AG04449 (cell line): ENCODE measurements at regions of chr5 and their contacts with region 1.

Region 1: GRCh38 chr5:150560401-150561193 is 52.7 kb downstream of the NDST1 start:
- DNase-seq: no peak
- H3K4me3 ChIP-seq: no peak overlapping the region
- CTCF ChIP-seq: peak; percentile 76

Region 2: DNA sequence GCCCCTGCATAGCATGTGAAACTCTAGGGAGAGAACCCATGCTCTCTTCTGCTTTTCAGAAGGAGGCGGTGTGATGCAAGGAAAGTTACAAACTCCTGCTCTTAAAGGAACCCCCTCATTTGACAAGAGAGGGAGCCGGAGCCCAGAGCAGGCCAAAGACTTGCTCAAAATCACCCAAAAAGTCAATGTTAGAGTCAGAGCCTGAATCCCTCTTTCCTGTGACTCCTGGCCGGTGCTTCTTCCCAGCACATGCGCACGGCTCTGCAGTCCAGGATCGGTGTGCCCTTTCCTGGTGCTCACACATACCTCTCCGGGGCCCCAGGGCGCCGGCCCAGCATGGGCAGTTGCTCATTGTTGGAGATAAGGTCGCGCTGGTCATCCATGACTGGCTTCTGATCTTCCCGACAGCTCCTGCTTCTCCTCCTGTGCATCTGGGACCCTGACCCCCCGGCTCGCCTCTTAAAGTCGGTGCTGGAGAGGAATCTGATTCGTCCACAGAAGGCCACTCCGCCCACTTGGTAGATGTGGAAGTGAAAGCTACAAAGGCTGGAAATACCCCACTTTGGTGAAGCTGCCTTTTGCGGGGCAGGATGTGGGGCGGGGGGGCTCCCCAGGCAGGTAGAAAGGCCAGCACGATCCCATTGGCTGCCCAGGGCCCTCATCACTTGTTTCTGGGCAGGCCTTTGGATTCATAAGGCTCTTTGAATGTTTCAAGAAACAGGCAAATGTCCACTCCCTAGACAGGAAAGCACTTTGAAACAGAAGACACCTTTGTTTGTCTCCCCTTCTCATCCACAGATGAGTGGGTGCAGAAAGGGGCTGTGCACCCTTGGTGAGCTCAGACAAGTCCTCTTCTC is 148.1 kb before region 1 on chr5 and contains the start of gene CD74:
- CTCF ChIA-PET with region 1: no interaction called
- POLR2A ChIA-PET with region 1: no interaction called
- DNase-seq: no peak
- H3K4me3 ChIP-seq: no peak within 1 kb of the TSS
- CTCF ChIP-seq: no peak

Region 3: GRCh38 chr5:150449517-150450339 is 110.9 kb before region 1 on chr5 and contains the start of gene RPS14:
- CTCF ChIA-PET with region 1: interaction called, 157 read pairs
- POLR2A ChIA-PET with region 1: interaction called, 4 read pairs
- DNase-seq: peak; percentile 52
- H3K4me3 ChIP-seq: peak within 1 kb of the TSS; percentile 68
- CTCF ChIP-seq: peak; percentile 93

Region 4: DNA sequence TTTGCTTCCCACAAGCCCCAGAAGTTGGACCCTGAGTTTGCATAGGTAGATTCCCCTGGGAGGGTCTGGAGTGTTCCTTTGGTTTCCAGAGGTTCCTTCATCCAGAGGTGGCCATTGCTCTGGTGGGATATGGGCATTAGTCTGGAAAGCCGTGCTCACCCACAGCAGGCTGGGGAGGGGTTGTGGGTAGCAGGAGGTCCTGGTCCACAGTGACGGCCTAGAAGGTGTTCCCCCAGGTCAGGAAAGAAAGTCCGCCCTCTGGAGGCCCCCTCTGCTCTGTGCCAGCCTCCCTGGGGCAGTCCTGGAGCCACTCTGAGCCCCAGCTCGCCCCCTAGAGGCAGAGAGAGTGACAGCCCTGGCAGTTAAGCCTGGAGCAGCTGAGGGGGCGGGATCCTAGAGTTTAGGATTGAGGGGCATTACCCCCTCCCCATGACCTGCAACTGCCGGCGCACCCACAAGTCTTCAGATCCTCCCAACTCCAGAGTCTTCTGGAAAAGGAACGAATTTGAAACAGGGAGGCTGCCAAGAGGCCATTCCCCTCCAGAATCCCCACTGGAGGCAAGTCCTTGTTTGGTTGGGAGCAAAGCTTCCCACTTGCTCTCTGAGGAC is 15.9 kb before region 1 on chr5:
- CTCF ChIA-PET with region 1: interaction called, 37 read pairs
- POLR2A ChIA-PET with region 1: no interaction called
- DNase-seq: no peak
- H3K4me3 ChIP-seq: no peak overlapping the region
- CTCF ChIP-seq: peak; percentile 81

Region 5: DNA sequence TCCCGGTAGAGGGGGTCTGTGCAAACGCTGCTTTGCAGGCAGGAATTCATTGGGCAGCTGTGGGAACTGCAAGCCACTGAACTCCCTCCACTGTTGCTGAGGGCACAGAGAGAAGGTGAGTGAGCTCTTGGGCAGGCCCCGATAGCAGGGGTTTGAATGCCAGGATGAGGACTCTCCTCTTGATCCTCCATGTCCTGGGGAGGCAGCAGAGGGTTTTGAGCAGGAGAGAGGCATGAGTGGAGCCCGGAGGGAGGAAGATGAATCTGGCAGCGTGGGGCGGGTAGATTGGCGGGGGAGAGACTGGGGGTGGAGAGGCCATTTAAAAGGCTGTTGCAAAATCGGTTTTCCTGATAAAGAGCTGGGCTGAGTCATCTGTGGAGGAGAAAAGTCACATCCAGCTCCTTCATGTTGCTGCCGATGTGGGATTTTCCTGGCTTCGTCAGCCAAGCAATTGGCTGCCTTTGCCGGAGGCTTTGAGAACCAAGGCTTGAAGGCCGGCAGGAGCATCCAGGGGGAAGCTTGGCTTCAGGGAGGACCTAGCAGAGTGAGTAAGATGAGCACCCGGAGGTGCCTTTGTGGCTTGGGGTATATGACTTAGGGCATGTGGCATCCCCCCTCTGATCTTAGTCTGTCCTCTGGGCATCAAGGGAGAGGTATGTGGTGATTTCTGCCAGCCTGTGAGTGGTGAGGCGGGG is 79.9 kb after region 1 on chr5 and contains the start of gene SYNPO:
- CTCF ChIA-PET with region 1: interaction called, 24 read pairs
- POLR2A ChIA-PET with region 1: no interaction called
- DNase-seq: peak; percentile 79
- H3K4me3 ChIP-seq: peak within 1 kb of the TSS; percentile 76
- CTCF ChIP-seq: no peak

Region 6: DNA sequence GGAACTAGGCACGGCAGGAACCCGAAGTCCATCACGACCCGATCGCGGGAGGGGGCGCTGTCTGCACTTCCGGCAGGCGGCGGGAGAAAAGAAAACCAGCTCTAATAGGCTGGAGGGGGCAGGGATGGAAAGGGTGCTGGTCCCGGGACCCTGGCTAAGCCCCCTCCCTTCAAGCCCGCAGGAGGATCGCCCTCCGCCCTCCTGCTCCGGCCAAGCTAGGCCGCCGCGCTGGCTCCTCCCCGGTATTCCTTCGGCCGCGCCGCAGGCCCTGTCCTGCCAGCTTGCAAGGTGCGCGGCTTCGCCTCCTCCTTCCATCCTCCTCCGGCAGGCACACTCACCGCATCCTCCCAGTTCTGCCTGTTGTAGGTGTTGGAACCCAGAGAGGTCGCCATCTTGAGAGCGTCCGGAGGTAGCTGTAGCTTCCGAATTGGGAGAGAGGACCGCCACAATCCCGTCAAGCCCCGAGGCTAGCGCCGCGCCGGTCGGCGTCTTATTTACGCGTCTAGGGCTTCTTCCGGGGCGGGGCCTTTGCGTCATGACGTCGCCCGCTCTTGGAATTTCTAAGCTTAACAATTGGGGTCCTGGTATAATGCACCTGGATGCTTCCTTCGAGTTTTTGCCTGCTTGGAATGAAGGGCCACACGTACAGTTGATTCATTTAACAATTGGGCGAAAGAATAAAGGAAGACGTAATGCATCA is 140.1 kb after region 1 on chr5 and contains the start of gene RBM22:
- CTCF ChIA-PET with region 1: interaction called, 93 read pairs
- POLR2A ChIA-PET with region 1: interaction called, 9 read pairs
- DNase-seq: peak; percentile 26
- H3K4me3 ChIP-seq: peak within 1 kb of the TSS; percentile 96
- CTCF ChIP-seq: peak; percentile 77

Region 7: DNA sequence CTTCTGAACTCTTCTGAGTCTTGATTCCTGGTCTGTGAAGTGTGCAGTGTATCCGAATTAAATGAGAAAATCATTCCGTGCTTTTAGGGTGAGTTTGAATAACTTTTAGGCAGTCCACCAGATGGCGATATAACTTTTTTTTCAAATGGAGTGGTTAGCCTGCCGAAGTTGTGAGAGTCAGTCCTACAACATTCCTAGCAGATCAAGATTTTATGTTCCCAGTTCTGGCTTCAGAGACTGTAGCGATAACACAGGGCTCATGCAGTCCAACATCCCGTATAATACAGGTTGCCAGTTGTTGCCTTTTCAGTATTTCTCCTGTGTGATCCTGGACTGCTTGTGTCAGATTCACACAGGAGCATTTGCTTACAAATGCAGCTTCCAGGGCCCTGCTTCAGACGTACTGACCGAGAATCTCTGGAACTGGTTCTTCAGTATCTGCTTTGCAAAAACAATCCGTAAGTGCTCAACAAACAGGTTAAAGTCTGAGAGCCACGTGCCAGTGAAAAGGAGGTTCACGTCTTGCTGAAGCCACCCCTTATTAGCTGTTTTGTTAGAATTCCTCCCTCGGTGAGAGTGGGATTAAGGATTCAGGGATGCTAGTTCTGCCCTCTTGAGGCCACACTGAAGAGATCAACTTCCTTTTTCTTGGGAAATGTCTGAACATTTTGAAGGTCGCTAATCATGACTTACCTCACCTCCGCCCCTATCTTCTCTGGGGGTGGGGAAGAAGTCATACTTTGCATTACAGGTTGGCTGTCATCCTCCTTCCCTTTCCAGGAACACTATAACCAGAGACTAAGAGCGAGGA is 240.7 kb after region 1 on chr5:
- CTCF ChIA-PET with region 1: interaction called, 11 read pairs
- POLR2A ChIA-PET with region 1: no interaction called
- DNase-seq: no peak
- H3K4me3 ChIP-seq: peak overlapping the region; percentile 39
- CTCF ChIP-seq: peak; percentile 53